Activated CD4-positive, alpha-beta T cell treated with anti-CD3 and anti-CD28 coated beads for 36 hours (primary cell): ENCODE measurements at regions of chr7 and their contacts with region 1.

Region 1: DNA sequence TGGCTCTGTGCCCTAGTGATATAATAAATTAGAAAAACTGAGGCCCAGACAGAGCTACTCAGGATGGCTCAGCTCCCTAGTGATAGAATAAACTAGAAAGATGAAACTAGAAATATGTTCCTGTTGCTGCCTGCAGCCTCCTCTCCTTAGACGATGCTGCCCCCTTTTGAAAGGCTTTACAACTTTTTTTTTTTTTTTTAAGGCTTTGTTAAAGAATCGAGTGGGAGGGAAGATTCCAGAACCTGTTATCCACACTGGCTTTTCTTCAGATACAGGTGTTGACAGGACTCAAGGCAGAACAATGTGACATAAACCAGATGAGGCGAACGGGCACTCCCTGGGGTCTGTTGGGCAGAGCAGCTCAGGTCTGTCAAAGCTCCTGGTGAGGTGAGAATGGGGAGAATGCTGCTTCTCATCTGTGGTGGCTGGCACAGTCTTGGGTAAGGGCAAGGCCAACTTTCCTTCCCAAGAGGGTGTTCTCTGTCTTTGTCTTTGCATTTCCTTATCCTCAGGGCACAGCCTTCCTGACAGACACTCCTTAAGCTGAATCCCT is 175.1 kb downstream of the COBL start:
- DNase-seq: peak; percentile 40
- ATAC-seq: peak; percentile 77
- H3K4me3 Mint-ChIP-seq: no peak overlapping the region
- H3K27ac Mint-ChIP-seq: no peak overlapping the region
- H3K4me1 Mint-ChIP-seq: peaks cover 23% of the 10 kb centered on the region
- H3K27me3 Mint-ChIP-seq: peaks cover 3% of the 10 kb centered on the region

Region 2: GRCh38 chr7:50068961-50069551 is 1072.5 kb before region 1 on chr7:
- CTCF ChIA-PET with region 1: no interaction called
- POLR2A ChIA-PET with region 1: no interaction called
- intact Hi-C with region 1: loop called in 1 of 2 experiments (anchors 10 kb)
- DNase-seq: peak; percentile 53
- ATAC-seq: peak; percentile 81
- H3K4me3 Mint-ChIP-seq: peak overlapping the region; percentile 72
- H3K27ac Mint-ChIP-seq: peak overlapping the region; percentile 81
- H3K4me1 Mint-ChIP-seq: peaks cover 22% of the 10 kb centered on the region
- H3K27me3 Mint-ChIP-seq: no peaks in the 10 kb centered on the region

Region 3: DNA sequence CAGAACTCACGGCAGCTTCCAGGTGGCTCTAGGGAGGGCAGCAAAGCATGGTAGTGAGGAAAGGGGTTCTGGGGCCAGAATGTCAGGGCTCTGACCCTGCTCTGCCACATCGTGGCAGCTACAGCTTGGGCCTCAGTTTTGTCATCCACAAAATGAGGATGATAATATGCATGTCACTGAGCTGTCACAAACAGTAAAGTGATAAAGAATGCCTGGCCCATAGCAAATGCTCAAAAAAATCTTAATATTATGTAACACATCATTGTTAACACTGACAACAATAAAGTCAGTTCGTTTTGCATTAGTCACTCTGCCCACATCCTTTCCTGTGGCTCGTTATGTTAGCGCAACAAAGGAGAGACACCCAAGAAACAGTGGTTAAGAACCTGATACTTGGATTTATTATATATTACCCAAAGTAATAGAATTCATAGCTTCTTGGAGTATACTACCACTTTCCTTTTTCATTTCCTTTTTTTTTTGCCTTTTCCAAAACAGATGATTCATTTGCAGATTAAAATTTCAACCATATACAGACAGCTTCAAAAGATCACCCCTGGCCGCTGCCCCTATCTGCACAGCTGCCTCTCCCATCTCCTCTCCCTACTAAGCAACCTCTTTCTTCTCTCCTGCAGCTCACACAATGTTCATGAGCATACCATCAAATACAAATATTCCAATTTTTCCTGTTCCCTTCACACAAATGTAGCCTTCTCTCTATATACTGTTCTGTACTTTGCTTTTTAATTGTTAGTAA is 530.8 kb before region 1 on chr7:
- CTCF ChIA-PET with region 1: no interaction called
- POLR2A ChIA-PET with region 1: no interaction called
- intact Hi-C with region 1: loop called in 1 of 2 experiments (anchors 5 kb)
- DNase-seq: peak; percentile 69
- ATAC-seq: peak; percentile 80
- H3K4me3 Mint-ChIP-seq: no peak overlapping the region
- H3K27ac Mint-ChIP-seq: no peak overlapping the region
- H3K4me1 Mint-ChIP-seq: peaks cover 29% of the 10 kb centered on the region
- H3K27me3 Mint-ChIP-seq: peaks cover 3% of the 10 kb centered on the region

Region 4: GRCh38 chr7:50782384-50783208 is 358.9 kb before region 1 on chr7 and contains the start of gene GRB10:
- CTCF ChIA-PET with region 1: no interaction called
- POLR2A ChIA-PET with region 1: no interaction called
- intact Hi-C with region 1: loop called in 1 of 2 experiments (anchors 2 kb)
- DNase-seq: no peak
- ATAC-seq: no peak
- H3K4me3 Mint-ChIP-seq: peak within 1 kb of the TSS; percentile 49
- H3K27ac Mint-ChIP-seq: peak within 1 kb of the TSS; percentile 48
- H3K4me1 Mint-ChIP-seq: peaks cover 16% of the 10 kb centered on the region
- H3K27me3 Mint-ChIP-seq: peaks cover 28% of the 10 kb centered on the region
- total RNA-seq, gene GRB10: 9.5 to 11.9 TPM

Region 5: GRCh38 chr7:51067757-51068156 is 73.8 kb before region 1 on chr7:
- CTCF ChIA-PET with region 1: interaction called, 6 read pairs
- POLR2A ChIA-PET with region 1: no interaction called
- intact Hi-C with region 1: loop called (anchors 1 to 5 kb)
- DNase-seq: peak; percentile 72
- ATAC-seq: no peak
- H3K4me3 Mint-ChIP-seq: no peak overlapping the region
- H3K27ac Mint-ChIP-seq: no peak overlapping the region
- H3K4me1 Mint-ChIP-seq: no peaks in the 10 kb centered on the region
- H3K27me3 Mint-ChIP-seq: no peaks in the 10 kb centered on the region